BJ (cell line): ENCODE measurements at regions of chr3 and their contacts with region 1.

Region 1: GRCh38 chr3:132730891-132731580 is 8.8 kb upstream of the NPHP3 start:
- DNase-seq: no peak
- H3K4me3 ChIP-seq: no peak overlapping the region
- H3K27me3 ChIP-seq: peaks cover 2% of the 10 kb centered on the region
- CTCF ChIP-seq: peak; percentile 51

Region 2: DNA sequence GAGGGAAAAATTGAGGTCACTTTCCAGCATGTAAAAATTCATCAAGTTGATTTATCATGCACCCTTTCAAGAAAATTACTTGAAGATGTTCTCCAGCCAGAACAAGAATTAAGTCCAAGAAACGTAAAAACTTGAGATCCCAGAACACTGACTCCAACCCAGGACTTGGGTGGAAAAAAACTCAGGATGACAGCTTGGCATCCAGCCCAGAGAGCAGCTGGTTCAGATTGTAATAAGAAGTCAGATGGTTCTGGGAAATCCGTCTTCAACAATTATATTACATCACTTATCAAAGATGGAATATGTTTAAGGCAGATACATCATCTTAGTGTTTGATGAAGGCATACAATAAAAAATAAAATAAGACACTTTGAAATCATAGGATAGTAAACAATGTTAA is 336.7 kb before region 1 on chr3:
- CTCF ChIA-PET with region 1: no interaction called
- POLR2A ChIA-PET with region 1: no interaction called
- DNase-seq: no peak
- H3K4me3 ChIP-seq: no peak overlapping the region
- H3K27me3 ChIP-seq: no peaks in the 10 kb centered on the region
- CTCF ChIP-seq: no peak

Region 3: DNA sequence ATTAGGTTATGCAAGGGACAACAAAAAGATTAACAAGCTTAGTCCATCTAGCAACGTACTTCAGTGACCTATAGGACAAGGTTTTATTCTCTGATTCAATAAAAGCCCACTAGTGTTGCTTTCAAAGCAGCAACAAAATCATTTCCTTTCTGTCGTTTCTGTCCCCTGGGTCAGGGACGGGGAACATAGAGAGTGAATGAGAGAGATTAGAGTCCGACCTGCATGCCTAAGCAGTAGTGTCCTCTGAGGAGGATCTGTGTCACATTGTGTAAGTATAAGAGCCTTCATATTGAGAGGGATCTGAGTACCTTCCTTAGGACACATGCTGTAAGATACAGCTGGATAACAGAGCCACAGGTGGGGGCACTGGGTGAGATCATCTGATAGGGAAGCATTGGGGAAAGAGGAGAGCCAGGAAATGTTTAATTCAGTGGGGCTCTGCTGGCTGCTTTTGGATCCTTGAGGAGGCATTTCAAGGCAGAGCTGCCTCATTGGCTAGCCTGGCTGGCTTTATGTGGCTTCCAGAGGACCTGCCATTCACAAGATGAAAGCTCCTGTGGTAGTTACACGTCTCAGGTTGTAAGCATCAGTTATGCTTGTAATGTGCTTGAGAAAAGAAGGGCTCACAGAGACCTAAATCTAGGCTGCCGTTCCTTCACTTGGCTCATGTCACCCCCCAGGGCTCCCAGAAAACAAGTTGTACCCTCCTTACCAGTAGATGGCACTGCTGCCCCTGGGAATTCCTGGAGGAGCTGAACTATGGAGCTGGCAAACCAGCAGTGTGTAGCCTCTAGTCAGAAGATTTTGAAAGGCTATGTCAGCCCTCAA is 309.9 kb after region 1 on chr3:
- CTCF ChIA-PET with region 1: interaction called, 28 read pairs
- POLR2A ChIA-PET with region 1: no interaction called
- DNase-seq: no peak
- H3K4me3 ChIP-seq: no peak overlapping the region
- H3K27me3 ChIP-seq: peaks cover 23% of the 10 kb centered on the region
- CTCF ChIP-seq: peak; percentile 82

Region 4: GRCh38 chr3:133377396-133377795 is 646.4 kb after region 1 on chr3:
- CTCF ChIA-PET with region 1: interaction called, 23 read pairs
- POLR2A ChIA-PET with region 1: no interaction called
- DNase-seq: no peak
- H3K4me3 ChIP-seq: no peak overlapping the region
- H3K27me3 ChIP-seq: 0 out of 2 replicates have a peak, but pooled peaks cover 2% of the 10 kb centered on the region
- CTCF ChIP-seq: peak; percentile 62

Region 5: GRCh38 chr3:133384331-133385027 is 653.4 kb after region 1 on chr3:
- CTCF ChIA-PET with region 1: interaction called, 23 read pairs
- POLR2A ChIA-PET with region 1: no interaction called
- DNase-seq: no peak
- H3K4me3 ChIP-seq: no peak overlapping the region
- H3K27me3 ChIP-seq: peaks cover 3% of the 10 kb centered on the region; the same call in 1 of the 2 replicates
- CTCF ChIP-seq: peak; percentile 75

Region 6: GRCh38 chr3:133426721-133427120 is 695.7 kb after region 1 on chr3:
- CTCF ChIA-PET with region 1: interaction called, 25 read pairs
- POLR2A ChIA-PET with region 1: no interaction called
- DNase-seq: no peak
- H3K4me3 ChIP-seq: no peak overlapping the region
- H3K27me3 ChIP-seq: peaks cover 4% of the 10 kb centered on the region
- CTCF ChIP-seq: no peak